ENCODE measurements at regions of chr7 and their contacts with region 1.

Region 1: GRCh38 chr7:69598081-69598486 is at the start of gene AUTS2:
- DNase-seq: peak; percentile 89 to 92
- ATAC-seq: peak; percentile 87 to 92 (median 88)
- H3K4me3 ChIP-seq: peak within 1 kb of the TSS; percentile 91
- H3K27ac ChIP-seq: peak within 1 kb of the TSS; percentile 87
- H3K4me1 ChIP-seq: peaks cover 3% of the 10 kb centered on the region
- H3K27me3 ChIP-seq: no peaks in the 10 kb centered on the region
- CTCF ChIP-seq: no peak
- total RNA-seq, gene AUTS2: 14.3 to 33.5 (median 22.1) TPM

Region 2: DNA sequence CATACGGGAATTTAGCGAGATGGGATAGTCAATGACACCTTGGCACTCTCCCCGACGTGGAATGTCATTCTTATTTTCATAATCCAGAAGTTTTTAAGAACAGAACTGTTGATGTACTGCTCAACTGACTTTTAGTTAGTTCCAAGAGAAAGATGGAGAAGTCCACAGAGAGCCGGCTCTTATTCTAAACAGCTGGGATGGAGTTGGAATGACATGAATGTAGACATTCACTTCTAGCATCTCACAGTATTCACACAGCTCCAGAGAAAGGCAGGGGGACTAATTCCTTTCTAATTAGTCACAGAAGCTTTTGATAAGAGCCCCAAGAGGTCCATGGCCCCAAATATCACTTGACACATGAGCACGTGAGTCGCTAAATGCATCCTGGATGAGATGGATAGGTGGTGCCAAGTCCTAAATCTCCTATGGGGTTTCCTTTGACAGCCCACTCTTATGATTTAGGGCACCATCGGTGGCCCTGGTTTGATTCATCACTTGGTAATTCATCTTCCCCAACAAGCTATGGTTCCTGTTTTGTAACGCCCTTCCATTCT is 420.1 kb before region 1 on chr7:
- intact Hi-C with region 1: no loop called
- DNase-seq: no peak
- ATAC-seq: peak in 1 of 4 donors; percentile 32
- H3K4me3 ChIP-seq: no peak overlapping the region
- H3K27ac ChIP-seq: no peak overlapping the region
- H3K4me1 ChIP-seq: no peaks in the 10 kb centered on the region
- H3K27me3 ChIP-seq: peaks cover 0 to 4% (median 0%) of the 10 kb centered on the region in 3 donors
- CTCF ChIP-seq: no peak

Region 3: DNA sequence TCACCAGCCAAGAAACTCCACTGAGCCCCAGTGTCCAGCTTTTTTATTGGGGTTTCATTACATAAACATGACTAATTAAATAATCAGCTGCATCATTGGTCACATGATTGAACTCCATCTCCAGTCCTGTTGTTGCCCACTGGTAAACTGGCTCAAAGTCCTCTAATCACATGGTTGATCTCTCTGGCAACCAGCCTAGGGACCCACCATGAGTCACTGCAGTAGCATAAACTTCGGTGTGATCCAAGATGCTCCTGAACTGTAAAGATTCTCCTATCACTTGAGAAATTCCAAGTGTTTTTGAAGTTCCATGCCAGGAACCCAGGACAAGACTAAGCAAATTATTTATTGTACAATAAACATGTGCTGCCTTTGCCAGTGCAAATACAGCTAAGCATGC is 130.3 kb before region 1 on chr7:
- intact Hi-C with region 1: loop called in 1 of 2 experiments (anchors 10 kb)
- DNase-seq: no peak
- ATAC-seq: no peak
- H3K4me3 ChIP-seq: no peak overlapping the region
- H3K27ac ChIP-seq: no peak overlapping the region
- H3K4me1 ChIP-seq: no peaks in the 10 kb centered on the region
- H3K27me3 ChIP-seq: peaks cover 0 to 2% (median 0%) of the 10 kb centered on the region in 3 donors
- CTCF ChIP-seq: no peak

Region 4: GRCh38 chr7:69517985-69518704 is 79.9 kb before region 1 on chr7:
- intact Hi-C with region 1: loop called in 1 of 2 experiments (anchors 5 kb)
- DNase-seq: peak; percentile 30 to 52
- ATAC-seq: peak; percentile 88 to 98 (median 94)
- H3K4me3 ChIP-seq: peak overlapping the region; percentile 12
- H3K27ac ChIP-seq: peak overlapping the region; percentile 70
- H3K4me1 ChIP-seq: peaks cover 4% of the 10 kb centered on the region
- H3K27me3 ChIP-seq: no peaks in the 10 kb centered on the region
- CTCF ChIP-seq: no peak